CD8-positive, alpha-beta T cell (primary cell): ENCODE measurements at regions of chr14 and their contacts with region 1.

Region 1: GRCh38 chr14:20697273-20698017 is 8.9 kb downstream of the ANG start:
- DNase-seq: peak; percentile 44 to 76 (median 60)
- ATAC-seq: peak; percentile 72
- H3K4me3 ChIP-seq: no peak overlapping the region
- H3K4me3 Mint-ChIP-seq: no peak overlapping the region
- H3K27ac ChIP-seq: no peak overlapping the region
- H3K27ac Mint-ChIP-seq: no peak overlapping the region
- H3K4me1 ChIP-seq: no peaks in the 10 kb centered on the region
- H3K4me1 Mint-ChIP-seq: no peaks in the 10 kb centered on the region
- H3K27me3 ChIP-seq: no peaks in the 10 kb centered on the region
- H3K27me3 Mint-ChIP-seq: no peaks in the 10 kb centered on the region
- CTCF ChIP-seq: peak; percentile 75

Region 2: GRCh38 chr14:20516906-20517305 is 180.5 kb before region 1 on chr14:
- CTCF ChIA-PET with region 1: no interaction called
- POLR2A ChIA-PET with region 1: no interaction called
- intact Hi-C with region 1: no loop called
- DNase-seq: no peak
- ATAC-seq: no peak
- H3K4me3 ChIP-seq: no peak overlapping the region
- H3K4me3 Mint-ChIP-seq: no peak overlapping the region
- H3K27ac ChIP-seq: no peak overlapping the region
- H3K27ac Mint-ChIP-seq: no peak overlapping the region
- H3K4me1 ChIP-seq: no peaks in the 10 kb centered on the region
- H3K4me1 Mint-ChIP-seq: no peaks in the 10 kb centered on the region
- H3K27me3 ChIP-seq: no peaks in the 10 kb centered on the region
- H3K27me3 Mint-ChIP-seq: no peaks in the 10 kb centered on the region
- CTCF ChIP-seq: no peak

Region 3: DNA sequence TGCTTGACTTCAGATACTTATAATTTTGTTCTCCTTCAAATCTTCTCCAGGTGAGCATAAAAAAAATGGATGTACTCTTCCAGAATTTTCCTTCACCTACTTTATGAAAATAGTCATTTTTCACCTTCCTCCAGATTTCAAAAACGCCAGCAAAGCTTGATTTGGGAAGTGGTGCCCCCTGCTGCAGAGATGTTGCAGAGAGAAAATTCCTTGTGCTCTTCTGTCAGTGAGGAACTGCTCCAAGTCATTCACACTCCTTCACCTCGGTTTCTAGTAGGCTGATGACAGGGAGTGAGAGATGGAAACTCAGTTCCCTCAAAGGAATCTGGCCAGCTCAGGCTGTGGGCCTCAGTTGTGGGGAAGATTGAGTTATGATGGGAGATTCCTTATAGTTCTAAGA is 169.5 kb after region 1 on chr14:
- CTCF ChIA-PET with region 1: interaction called, 30 read pairs
- POLR2A ChIA-PET with region 1: no interaction called
- intact Hi-C with region 1: loop called in 1 of 2 experiments (anchors 2 kb)
- DNase-seq: peak in 2 of 9 experiments; percentile 5 to 20
- ATAC-seq: no peak
- H3K4me3 ChIP-seq: no peak overlapping the region
- H3K4me3 Mint-ChIP-seq: no peak overlapping the region
- H3K27ac ChIP-seq: no peak overlapping the region
- H3K27ac Mint-ChIP-seq: no peak overlapping the region
- H3K4me1 ChIP-seq: no peaks in the 10 kb centered on the region
- H3K4me1 Mint-ChIP-seq: no peaks in the 10 kb centered on the region
- H3K27me3 ChIP-seq: no peaks in the 10 kb centered on the region
- H3K27me3 Mint-ChIP-seq: peaks cover 12% of the 10 kb centered on the region
- CTCF ChIP-seq: no peak

Region 4: DNA sequence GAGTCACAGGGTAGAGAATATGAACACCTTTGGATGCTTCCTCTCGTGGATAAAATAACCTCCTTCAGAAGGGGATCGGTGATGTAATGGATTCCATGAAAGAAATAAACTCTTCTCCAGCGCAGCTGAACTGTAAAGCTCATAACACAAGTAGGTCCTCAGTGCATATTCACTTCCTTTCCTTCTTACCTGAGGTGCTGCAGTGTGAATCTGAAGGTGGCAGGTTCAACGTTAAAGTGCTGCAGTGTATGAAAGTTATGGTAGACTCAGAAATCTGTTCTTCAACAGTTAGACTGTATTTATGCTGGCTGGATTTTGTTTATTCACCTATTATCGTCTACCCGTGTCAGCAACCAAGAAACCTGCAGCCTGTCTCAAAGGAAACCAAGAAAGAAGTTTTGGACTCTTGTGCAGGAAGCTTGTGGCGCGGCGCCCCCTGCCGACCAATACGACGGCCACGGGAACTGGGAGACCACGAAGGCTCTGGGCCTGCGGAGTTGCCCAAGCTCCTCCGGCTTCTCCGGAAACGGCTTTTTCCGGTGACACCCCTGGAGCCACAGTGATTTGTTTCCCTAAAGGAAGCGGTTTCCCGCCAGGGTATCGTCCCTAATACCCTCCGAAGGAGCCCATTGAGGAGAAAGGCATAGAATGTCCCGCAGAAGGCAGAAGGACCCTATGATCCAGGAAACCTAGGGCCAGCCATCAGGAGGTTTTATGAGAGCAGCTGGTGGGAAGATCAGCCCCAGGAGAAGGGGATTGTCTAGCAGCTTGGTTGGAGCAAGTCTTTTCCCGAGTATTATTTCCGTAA is 176.1 kb after region 1 on chr14:
- CTCF ChIA-PET with region 1: interaction called, 30 read pairs
- POLR2A ChIA-PET with region 1: no interaction called
- intact Hi-C with region 1: loop called (anchors 1 to 2 kb)
- DNase-seq: peak; percentile 47 to 86 (median 76)
- ATAC-seq: peak; percentile 74
- H3K4me3 ChIP-seq: no peak overlapping the region
- H3K4me3 Mint-ChIP-seq: no peak overlapping the region
- H3K27ac ChIP-seq: no peak overlapping the region
- H3K27ac Mint-ChIP-seq: no peak overlapping the region
- H3K4me1 ChIP-seq: peaks cover 10% of the 10 kb centered on the region
- H3K4me1 Mint-ChIP-seq: peaks cover 13% of the 10 kb centered on the region
- H3K27me3 ChIP-seq: no peaks in the 10 kb centered on the region
- H3K27me3 Mint-ChIP-seq: peaks cover 12% of the 10 kb centered on the region
- CTCF ChIP-seq: peak; percentile 82